Colonic mucosa (tissue), 4 donors: ENCODE measurements at regions of chrX and their contacts with region 1.

Region 1: DNA sequence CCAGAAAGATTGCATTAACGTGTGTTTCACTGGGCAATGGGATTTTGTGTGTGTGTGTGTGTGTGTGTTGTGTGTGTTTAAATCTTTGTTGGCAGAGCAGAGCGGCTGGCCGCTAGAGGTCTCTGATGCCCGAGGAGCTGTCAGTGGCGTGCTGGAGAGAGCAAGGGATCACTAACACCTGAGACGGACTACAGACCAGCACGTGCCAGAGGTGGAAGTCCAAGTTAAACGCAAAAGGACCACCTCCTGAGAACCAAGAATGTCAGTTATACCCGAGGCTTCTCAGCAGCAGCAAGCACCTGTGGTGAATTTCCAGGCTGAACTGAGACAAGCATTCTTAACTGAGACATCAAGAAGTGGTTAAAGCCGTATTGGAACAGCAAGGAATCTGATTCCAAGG is 9.0 kb upstream of the SLC25A14 start:
- DNase-seq: peak; percentile 57
- H3K4me3 ChIP-seq: no peak overlapping the region
- H3K27ac ChIP-seq: no peak overlapping the region
- H3K4me1 ChIP-seq: no peaks in the 10 kb centered on the region
- H3K27me3 ChIP-seq: no peaks in the 10 kb centered on the region
- CTCF ChIP-seq: peak; percentile 31

Region 2: GRCh38 chrX:130909469-130910136 is 578.9 kb after region 1 on chrX:
- intact Hi-C with region 1: loop called (anchors 5 kb)
- DNase-seq: no peak
- H3K4me3 ChIP-seq: no peak overlapping the region
- H3K27ac ChIP-seq: no peak overlapping the region
- H3K4me1 ChIP-seq: no peaks in the 10 kb centered on the region
- H3K27me3 ChIP-seq: no peaks in the 10 kb centered on the region
- CTCF ChIP-seq: no peak